ENCODE measurements at regions of chr19 and their contacts with region 1.

Region 1: GRCh38 chr19:13952154-13953035 is at the start of gene DCAF15:
- DNase-seq: peak; percentile 99
- H3K4me3 ChIP-seq: peak within 1 kb of the TSS; percentile 76
- H3K27ac ChIP-seq: no peak within 1 kb of the TSS
- H3K27me3 ChIP-seq: no peaks in the 10 kb centered on the region
- CTCF ChIP-seq: no peak
- polyA plus RNA-seq, gene DCAF15: 6.1 and 7.3 TPM in 2 replicates

Region 2: DNA sequence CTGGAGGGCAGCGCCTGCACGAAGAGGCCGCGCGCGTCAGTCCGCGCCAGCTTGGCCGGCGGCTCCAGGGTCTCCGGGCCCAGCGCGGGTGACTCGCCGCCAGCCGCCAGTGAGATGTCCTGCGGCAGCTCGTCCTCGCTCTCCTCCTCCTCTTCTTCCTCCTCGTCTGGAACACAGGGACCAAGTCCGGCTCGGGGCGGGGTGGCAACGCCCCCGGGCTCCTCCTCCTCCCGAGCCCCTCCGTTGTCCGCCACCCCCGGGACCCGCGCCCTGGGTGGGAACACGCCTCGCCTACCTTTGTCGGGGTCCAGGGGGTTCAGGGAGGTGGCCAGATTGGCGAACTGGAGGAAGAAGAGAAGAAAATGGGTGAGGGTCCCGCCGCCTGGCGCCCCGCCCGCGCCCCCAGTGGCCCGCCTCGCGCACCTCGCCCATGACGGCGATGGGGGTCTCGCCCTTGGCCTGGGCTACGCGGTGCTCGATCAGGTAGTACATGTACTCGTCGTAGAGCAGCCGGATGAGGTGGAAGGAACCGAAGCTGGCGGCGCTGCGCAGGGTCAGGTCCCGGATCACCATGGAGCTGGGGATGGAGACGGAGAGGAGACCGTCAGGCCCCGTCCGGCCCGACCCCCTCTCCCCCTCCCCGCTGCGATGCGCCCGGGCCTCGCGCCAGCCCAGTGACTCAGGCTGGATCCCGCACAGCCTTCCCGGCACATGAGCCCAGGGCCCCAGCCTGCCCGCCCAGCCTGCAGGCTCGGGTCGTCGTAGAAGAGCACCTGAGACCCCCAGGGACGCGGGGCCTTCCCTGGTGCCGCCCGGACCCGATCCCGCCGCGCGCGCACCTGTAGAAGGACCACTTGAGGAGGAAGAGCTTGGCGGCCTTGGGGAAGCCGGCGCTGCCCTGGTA is 10.6 kb after region 1 on chr19:
- CTCF ChIA-PET with region 1: no interaction called
- POLR2A ChIA-PET with region 1: interaction called, 14 read pairs
- DNase-seq: no peak
- H3K4me3 ChIP-seq: peak overlapping the region; percentile 7; the same call in 1 of the 2 replicates
- H3K27ac ChIP-seq: no peak overlapping the region
- H3K27me3 ChIP-seq: no peaks in the 10 kb centered on the region
- CTCF ChIP-seq: no peak

Region 3: GRCh38 chr19:14167576-14168138 is 215.3 kb after region 1 on chr19:
- CTCF ChIA-PET with region 1: no interaction called
- POLR2A ChIA-PET with region 1: no interaction called
- DNase-seq: no peak
- H3K4me3 ChIP-seq: no peak overlapping the region
- H3K27ac ChIP-seq: no peak overlapping the region
- H3K27me3 ChIP-seq: no peaks in the 10 kb centered on the region
- CTCF ChIP-seq: no peak

Measured in AG04450 (cell line).